ENCODE measurements at regions of chr9 and their contacts with region 1.

Region 1: DNA sequence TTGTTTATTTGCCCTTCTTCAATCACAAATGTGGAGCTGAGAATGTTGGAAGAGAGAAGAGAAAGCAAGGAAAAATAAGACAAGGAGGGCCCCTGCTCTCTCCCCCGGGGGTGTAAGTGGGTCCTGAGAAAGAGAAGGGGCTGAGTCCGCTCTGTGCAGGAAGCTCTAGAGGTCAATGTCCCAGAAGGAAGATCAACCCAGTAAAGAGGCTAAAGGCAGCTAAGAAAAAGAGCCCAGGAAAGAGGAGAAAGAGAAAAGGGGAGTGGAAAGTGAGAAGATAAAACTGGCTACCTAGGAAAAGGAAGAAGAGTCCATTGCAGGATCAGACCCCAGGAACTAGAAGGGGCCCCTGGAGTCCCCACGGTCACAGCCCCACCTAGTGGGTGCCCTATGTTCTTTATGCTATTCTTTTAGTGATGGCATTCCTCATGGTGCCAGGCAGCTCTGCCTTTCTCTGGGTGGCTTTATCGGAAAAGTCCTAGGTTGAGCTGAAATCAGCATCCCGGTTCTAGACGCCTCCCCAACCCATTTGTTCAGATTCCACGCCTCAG is 583.4 kb downstream of the ACTL7B start:
- DNase-seq: peak; percentile 41 to 68
- ATAC-seq: peak; percentile 77 to 93 (median 86)
- H3K4me3 ChIP-seq: peak overlapping the region; percentile 37
- H3K27ac ChIP-seq: peak overlapping the region; percentile 30
- H3K4me1 ChIP-seq: peaks cover 8% of the 10 kb centered on the region
- H3K27me3 ChIP-seq: no peaks in the 10 kb centered on the region
- CTCF ChIP-seq: peak; percentile 67

Region 2: DNA sequence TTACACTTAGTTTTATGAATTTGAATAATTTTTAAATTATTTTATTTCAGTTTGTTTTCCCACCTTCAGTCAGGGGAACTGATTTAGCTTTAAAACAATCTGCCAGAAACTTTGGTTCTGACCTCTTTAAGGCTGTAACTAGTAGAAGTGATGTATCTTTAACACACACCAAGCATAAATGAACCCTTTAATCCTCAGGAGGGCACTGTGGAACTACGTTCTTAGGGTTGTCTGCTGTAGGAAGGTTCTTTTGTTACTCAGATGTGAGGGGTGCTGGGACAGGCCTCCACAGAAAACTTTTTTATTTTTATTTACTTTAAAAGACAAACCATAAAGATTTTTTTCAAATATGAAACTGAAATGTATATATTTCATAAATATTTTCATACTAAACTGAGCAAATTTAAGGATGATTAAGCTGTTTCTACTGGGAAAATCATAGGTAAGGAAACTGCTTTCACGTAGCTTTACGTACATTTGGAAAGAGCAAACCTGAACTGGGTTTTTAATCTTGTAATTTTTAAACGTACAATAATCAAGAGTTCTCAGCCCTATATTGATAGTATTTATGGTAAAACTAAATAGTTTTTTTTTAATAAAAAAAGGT is 788.2 kb before region 1 on chr9:
- intact Hi-C with region 1: loop called in 1 of 2 experiments (anchors 2 kb)
- DNase-seq: no peak
- ATAC-seq: peak; percentile 60 to 77 (median 71)
- H3K4me3 ChIP-seq: peak overlapping the region; percentile 94
- H3K27ac ChIP-seq: peak overlapping the region; percentile 19
- H3K4me1 ChIP-seq: peaks cover 26% of the 10 kb centered on the region
- H3K27me3 ChIP-seq: no peaks in the 10 kb centered on the region
- CTCF ChIP-seq: peak; percentile 63

Region 3: DNA sequence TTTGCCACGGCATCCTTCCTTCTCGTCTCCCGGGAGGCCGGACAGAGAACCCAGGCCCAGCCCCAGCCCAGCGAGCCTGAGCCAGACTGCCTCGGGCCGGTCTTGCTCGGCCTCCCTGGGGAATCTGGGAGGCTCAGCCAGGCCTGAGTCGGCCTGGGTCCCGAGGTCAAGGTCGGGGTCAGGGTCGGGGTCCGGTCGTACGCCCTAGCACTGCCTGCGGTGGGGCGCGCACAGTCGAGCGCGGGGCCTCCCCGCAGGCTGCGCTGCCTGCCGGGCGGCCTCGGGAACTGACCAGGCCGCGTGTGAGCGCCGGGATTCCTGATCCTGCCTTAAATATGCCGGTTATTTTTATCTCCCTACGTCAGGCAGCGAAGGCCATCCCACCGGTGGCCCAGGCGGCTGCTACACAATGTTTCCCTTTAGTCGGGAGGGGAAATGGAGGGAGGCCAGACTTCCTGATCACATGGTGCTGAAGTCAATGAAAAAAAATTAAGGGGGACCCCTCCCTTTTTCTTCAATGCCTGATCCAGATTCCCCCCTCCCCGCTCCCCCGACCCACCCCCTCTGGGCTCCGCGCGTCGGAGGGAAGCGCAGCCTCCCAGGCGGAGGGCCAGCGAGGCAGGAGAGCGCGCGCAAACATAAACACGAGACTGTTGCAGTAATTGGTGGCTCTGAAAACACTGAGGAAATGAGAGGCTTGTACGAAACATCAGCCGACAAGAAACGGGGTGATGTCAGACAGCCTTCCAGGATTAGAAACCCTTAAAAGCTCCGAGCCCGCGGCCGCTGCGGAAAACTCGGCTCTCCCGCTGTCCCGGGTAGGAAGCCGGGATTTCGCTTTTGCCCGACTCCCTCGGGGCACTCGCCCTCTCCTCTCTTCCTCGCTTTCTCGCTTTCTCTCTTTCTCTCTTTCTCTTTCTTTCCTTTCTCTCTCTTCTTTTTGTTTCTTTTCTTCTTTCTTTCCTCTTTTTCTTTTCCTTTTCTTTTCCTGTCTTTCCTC is 634.7 kb before region 1 on chr9:
- intact Hi-C with region 1: loop called in 1 of 2 experiments (anchors 10 kb)
- DNase-seq: peak; percentile 90 to 93
- ATAC-seq: peak; percentile 89 to 93 (median 92)
- H3K4me3 ChIP-seq: peak overlapping the region; percentile 65
- H3K27ac ChIP-seq: peak overlapping the region; percentile 96
- H3K4me1 ChIP-seq: peaks cover 17% of the 10 kb centered on the region
- H3K27me3 ChIP-seq: no peaks in the 10 kb centered on the region
- CTCF ChIP-seq: peak; percentile 32

Region 4: DNA sequence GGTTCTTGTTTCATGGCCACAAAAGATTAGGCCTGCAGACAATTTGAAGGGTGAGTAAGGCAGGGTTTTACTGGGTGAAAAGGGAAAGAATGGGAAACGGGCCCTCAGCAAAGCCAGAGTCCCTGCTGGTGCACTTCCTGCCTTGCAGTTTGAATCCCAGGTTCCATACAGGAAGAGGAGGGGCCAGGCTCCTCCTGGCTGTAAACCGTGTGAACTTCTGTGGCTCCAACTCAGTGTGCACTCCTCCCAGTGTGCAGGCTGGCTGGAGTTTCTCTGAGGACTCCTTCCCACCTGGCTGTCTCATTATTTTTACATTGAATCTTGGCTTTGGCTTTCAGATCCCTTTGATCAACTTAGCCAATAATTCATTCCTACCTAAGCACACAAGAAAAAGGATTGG is 415.8 kb before region 1 on chr9:
- intact Hi-C with region 1: loop called in 1 of 2 experiments (anchors 10 kb)
- DNase-seq: no peak
- ATAC-seq: no peak
- H3K4me3 ChIP-seq: no peak overlapping the region
- H3K27ac ChIP-seq: no peak overlapping the region
- H3K4me1 ChIP-seq: no peaks in the 10 kb centered on the region
- H3K27me3 ChIP-seq: no peaks in the 10 kb centered on the region
- CTCF ChIP-seq: no peak

Region 5: DNA sequence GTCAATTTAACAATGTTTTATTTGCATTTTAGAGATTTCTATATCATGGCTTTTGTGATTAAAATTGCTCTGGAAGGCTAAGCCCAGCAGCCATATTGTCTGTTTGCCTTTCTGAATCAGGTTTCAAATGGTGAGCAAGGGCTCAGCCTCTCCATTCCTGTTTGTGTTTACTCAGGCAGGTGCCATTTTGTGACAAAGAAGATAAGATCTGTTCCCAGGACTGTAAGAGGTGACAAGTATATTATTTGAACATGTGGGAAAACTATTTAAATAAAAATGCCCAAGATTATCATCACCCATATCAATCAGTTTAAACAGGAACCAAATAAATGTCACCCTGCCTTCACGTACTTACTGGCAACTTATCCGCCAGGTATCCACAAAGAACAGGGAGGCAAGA is 141.5 kb before region 1 on chr9:
- intact Hi-C with region 1: no loop called
- DNase-seq: no peak
- ATAC-seq: no peak
- H3K4me3 ChIP-seq: no peak overlapping the region
- H3K27ac ChIP-seq: no peak overlapping the region
- H3K4me1 ChIP-seq: no peaks in the 10 kb centered on the region
- H3K27me3 ChIP-seq: no peaks in the 10 kb centered on the region
- CTCF ChIP-seq: no peak

Region 6: DNA sequence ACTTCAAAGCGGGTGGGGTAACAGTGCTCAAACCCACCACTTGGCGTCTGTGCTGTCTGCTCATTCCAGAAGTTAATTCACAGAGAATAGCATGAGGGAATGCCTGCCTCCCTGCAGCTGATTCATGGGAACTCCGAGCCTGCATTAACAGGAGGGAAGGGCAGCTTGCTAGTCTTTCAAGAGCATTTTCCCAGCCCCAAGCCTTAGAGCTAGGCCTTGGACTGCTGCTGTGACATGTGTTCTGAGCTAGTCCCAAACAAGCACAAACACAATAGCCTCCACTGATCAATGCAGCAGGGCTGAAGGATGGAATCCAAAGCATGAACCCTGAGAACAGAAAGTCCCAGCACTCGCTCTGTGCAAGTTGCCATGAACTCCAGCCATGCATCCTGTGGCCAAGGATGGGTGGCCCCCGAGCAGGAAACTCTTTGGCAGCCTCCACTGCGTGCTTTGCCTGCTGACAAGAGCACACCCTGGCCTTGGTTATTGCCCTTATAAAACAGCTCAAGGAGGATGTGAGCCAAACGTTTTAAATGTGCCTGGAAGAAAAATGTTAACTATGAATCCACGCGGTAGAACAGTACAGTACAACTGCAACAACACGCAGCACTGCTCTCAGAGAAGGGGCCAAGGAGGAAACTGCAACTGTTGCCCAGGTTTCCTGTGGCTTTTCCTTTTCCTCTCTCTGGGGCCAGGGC is 129.8 kb before region 1 on chr9:
- intact Hi-C with region 1: loop called in 1 of 2 experiments (anchors 10 kb)
- DNase-seq: peak; percentile 80 to 92
- ATAC-seq: peak; percentile 72 to 97 (median 93)
- H3K4me3 ChIP-seq: no peak overlapping the region
- H3K27ac ChIP-seq: peak overlapping the region; percentile 59
- H3K4me1 ChIP-seq: peaks cover 23% of the 10 kb centered on the region
- H3K27me3 ChIP-seq: no peaks in the 10 kb centered on the region
- CTCF ChIP-seq: no peak

Region 7: DNA sequence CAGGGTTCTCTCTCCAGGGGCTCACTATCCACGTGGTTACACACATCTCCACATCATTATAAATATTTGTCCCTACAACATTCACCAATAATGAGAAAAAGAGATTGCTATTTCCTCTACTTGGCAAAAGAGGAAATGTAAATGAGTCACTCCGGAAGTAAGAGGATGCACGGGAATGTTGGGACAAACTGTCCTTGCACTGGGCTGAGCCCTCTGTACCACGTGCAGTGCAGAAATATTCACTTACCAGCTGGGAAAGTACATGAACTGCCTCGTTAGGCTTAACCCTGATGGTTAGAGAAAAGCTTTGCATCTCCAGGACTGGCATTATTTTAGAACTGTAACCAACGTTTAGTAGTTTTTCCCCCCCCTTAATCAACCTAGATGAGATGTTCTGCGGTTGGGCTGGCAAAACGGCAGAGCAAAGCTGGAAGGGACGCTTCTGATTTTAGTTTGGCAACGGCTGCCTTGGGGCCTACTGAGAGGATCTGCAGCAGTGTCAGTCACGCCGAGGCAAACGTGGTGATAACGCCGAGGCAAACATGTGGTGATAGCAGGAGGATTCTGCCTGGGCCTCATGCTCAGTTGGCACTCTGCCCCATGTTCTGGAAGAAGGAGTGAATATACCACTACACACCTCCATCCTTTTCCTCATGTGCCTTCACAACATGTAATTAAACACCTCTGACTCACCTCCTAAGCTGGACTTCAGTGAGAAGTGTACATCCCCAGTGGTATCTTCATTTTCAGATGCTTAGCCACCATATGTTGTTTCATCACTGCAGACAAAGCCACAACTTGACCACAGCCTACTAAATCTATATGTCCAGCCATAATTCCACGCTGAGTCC is 121.5 kb before region 1 on chr9:
- intact Hi-C with region 1: loop called (anchors 5 to 10 kb)
- DNase-seq: peak; percentile 27 to 58
- ATAC-seq: peak; percentile 32 to 89 (median 80)
- H3K4me3 ChIP-seq: no peak overlapping the region
- H3K27ac ChIP-seq: peak overlapping the region; percentile 21
- H3K4me1 ChIP-seq: peaks cover 10% of the 10 kb centered on the region
- H3K27me3 ChIP-seq: no peaks in the 10 kb centered on the region
- CTCF ChIP-seq: no peak

Region 8: GRCh38 chr9:108234811-108235210 is 37.6 kb before region 1 on chr9:
- intact Hi-C with region 1: no loop called
- DNase-seq: no peak
- ATAC-seq: no peak
- H3K4me3 ChIP-seq: no peak overlapping the region
- H3K27ac ChIP-seq: no peak overlapping the region
- H3K4me1 ChIP-seq: no peaks in the 10 kb centered on the region
- H3K27me3 ChIP-seq: no peaks in the 10 kb centered on the region
- CTCF ChIP-seq: no peak